ENCODE measurements at regions of chr1 and their contacts with region 1.

Region 1: GRCh38 chr1:176843352-176844297 is 320.9 kb downstream of the ASTN1 start:
- DNase-seq: peak; percentile 28
- H3K4me3 ChIP-seq: no peak overlapping the region
- H3K27ac ChIP-seq: no peak overlapping the region
- H3K4me1 ChIP-seq: no peaks in the 10 kb centered on the region
- H3K27me3 ChIP-seq: no peaks in the 10 kb centered on the region
- CTCF ChIP-seq: peak; percentile 46 to 81 (median 58)
- POLR2A ChIP-seq: no peak

Region 2: GRCh38 chr1:176577646-176578197 is 265.9 kb before region 1 on chr1:
- intact Hi-C with region 1: loop called (anchors 10 kb)
- DNase-seq: no peak
- H3K4me3 ChIP-seq: no peak overlapping the region
- H3K27ac ChIP-seq: no peak overlapping the region
- H3K4me1 ChIP-seq: no peaks in the 10 kb centered on the region
- H3K27me3 ChIP-seq: no peaks in the 10 kb centered on the region
- CTCF ChIP-seq: no peak
- POLR2A ChIP-seq: no peak

Region 3: DNA sequence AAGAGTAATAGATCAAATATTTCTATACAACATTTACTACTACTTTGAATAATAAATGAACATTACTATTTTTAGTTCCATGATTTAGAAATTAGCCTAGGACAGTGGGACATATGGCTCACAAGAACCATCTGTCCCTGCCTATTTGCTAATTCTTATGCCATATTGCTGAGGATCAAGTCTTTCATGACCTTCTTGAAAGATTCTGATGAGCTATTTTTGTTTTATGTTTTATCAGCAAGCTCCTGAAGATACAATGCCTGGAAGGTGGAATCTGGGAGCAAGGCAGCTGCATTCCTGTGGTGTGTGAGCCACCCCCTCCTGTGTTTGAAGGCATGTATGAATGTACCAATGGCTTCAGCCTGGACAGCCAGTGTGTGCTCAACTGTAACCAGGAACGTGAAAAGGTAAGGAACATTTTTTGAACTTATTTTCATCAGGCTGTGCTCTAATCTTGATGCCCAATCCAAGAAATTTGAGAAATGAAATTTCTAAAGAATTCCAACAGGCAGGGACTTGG is 54.0 kb before region 1 on chr1:
- intact Hi-C with region 1: no loop called
- DNase-seq: no peak
- H3K4me3 ChIP-seq: no peak overlapping the region
- H3K27ac ChIP-seq: no peak overlapping the region
- H3K4me1 ChIP-seq: no peaks in the 10 kb centered on the region
- H3K27me3 ChIP-seq: no peaks in the 10 kb centered on the region
- CTCF ChIP-seq: no peak
- POLR2A ChIP-seq: no peak